B cell (primary cell): ENCODE measurements at regions of chr6 and their contacts with region 1.

Region 1: GRCh38 chr6:107657755-107658461 is 166.2 kb downstream of the SCML4 start:
- DNase-seq: peak; percentile 94
- ATAC-seq: peak; percentile 93
- H3K4me3 ChIP-seq: peak overlapping the region; percentile 34 to 68 (median 53)
- H3K4me3 Mint-ChIP-seq: peak overlapping the region; percentile 84
- H3K27ac ChIP-seq: peak overlapping the region; percentile 86 to 91
- H3K27ac Mint-ChIP-seq: peak overlapping the region; percentile 93
- H3K4me1 ChIP-seq: peaks cover 57 to 62% of the 10 kb centered on the region in 2 donors
- H3K4me1 Mint-ChIP-seq: peaks cover 64% of the 10 kb centered on the region
- H3K27me3 ChIP-seq: no peaks in the 10 kb centered on the region
- H3K27me3 Mint-ChIP-seq: no peaks in the 10 kb centered on the region
- CTCF ChIP-seq: peak; percentile 40

Region 2: GRCh38 chr6:106325336-106326178 is 1332.4 kb before region 1 on chr6 and contains the start of gene ATG5:
- CTCF ChIA-PET with region 1: no interaction called
- POLR2A ChIA-PET with region 1: no interaction called
- intact Hi-C with region 1: loop called (anchors 10 kb)
- DNase-seq: peak; percentile 99
- ATAC-seq: peak; percentile 92
- H3K4me3 ChIP-seq: peak within 1 kb of the TSS; percentile 87 to 99 (median 94)
- H3K4me3 Mint-ChIP-seq: peak within 1 kb of the TSS; percentile 100
- H3K27ac ChIP-seq: peak within 1 kb of the TSS; percentile 89 to 91
- H3K27ac Mint-ChIP-seq: peak within 1 kb of the TSS; percentile 98
- H3K4me1 ChIP-seq: peaks cover 16 to 20% of the 10 kb centered on the region in 2 donors
- H3K4me1 Mint-ChIP-seq: peaks cover 44% of the 10 kb centered on the region
- H3K27me3 ChIP-seq: peaks cover 0 to 6% (median 4%) of the 10 kb centered on the region in 4 experiments
- H3K27me3 Mint-ChIP-seq: peaks cover 27% of the 10 kb centered on the region
- CTCF ChIP-seq: no peak
- total RNA-seq, gene ATG5: 26.3 and 34.0 TPM in 2 replicates

Region 3: DNA sequence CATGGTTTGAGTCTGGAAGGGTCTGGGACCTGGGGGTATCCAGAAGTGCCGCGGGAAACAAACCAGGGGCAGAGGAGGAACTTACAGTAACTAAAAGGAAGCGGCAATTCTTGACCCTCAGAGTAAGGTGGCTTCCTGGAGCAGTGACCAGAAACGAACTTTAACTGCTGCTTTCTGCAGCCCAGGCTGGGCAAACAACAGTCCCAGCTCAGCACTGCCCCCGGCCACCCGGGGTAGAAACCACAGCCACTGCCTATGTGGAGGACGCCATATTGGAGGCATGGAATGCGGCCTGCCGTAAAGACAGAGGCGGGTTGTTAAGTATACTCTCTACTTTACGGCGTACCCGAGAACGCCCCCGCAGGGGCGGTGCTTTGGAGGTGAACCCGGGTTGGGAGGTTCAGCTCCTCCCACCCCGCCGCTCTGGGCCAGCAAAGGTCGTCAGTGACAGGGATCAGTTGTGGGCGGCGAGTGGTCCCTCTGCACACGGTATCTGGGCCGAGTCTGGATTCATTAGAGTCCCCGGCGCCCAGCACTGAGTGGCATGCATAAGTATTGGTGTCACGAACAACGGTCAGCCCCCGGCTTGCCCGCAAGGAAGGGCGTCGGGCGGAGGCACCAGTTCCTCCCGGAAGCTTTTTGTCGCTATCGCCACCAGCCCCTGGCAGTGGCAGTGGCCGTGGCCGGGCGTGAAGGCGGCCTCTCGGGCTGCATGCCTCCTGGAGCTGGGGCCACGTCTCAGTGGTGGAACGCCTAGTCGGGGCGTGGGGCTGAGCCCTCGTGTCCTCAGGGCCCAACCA is 198.4 kb before region 1 on chr6 and contains the start of gene PDSS2:
- CTCF ChIA-PET with region 1: interaction called, 7 read pairs
- POLR2A ChIA-PET with region 1: interaction called, 4 read pairs
- intact Hi-C with region 1: loop called (anchors 1 kb)
- DNase-seq: peak; percentile 96
- ATAC-seq: peak; percentile 96
- H3K4me3 ChIP-seq: peak within 1 kb of the TSS; percentile 70 to 96 (median 93)
- H3K4me3 Mint-ChIP-seq: peak within 1 kb of the TSS; percentile 88
- H3K27ac ChIP-seq: peak within 1 kb of the TSS; percentile 88 to 91
- H3K27ac Mint-ChIP-seq: peak within 1 kb of the TSS; percentile 99
- H3K4me1 ChIP-seq: peaks cover 10 to 13% of the 10 kb centered on the region in 2 donors
- H3K4me1 Mint-ChIP-seq: peaks cover 25% of the 10 kb centered on the region
- H3K27me3 ChIP-seq: no peaks in the 10 kb centered on the region
- H3K27me3 Mint-ChIP-seq: no peaks in the 10 kb centered on the region
- CTCF ChIP-seq: peak; percentile 52
- total RNA-seq, gene PDSS2: 16.9 and 18.3 TPM in 2 replicates

Region 4: DNA sequence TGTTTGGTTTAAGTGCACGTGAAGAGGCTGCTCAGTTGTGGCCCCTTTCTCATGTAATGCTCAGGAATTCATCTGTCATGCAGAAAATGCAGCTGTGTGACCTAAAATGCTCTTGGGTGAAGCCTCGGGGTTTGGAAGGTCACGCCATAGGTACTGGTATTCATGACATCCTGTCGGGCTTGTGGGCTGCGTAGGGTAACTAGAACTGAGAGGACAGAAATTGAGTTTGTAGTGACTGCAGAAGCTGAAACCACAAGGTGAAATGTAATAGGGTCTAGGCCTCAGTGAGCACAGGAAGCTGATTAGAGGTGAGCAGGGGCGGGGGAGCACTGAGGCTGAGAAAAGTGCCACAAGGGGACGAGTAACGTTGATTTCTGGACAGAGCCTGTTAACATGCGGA is 39.2 kb before region 1 on chr6:
- CTCF ChIA-PET with region 1: no interaction called
- POLR2A ChIA-PET with region 1: interaction called, 11 read pairs
- intact Hi-C with region 1: loop called (anchors 5 kb)
- DNase-seq: peak; percentile 64
- ATAC-seq: peak; percentile 92
- H3K4me3 ChIP-seq: no peak overlapping the region
- H3K4me3 Mint-ChIP-seq: peak overlapping the region; percentile 24
- H3K27ac ChIP-seq: peak overlapping the region; percentile 13 to 32
- H3K27ac Mint-ChIP-seq: peak overlapping the region; percentile 11
- H3K4me1 ChIP-seq: peaks cover 34 to 45% of the 10 kb centered on the region in 2 donors
- H3K4me1 Mint-ChIP-seq: peaks cover 34% of the 10 kb centered on the region
- H3K27me3 ChIP-seq: no peaks in the 10 kb centered on the region
- H3K27me3 Mint-ChIP-seq: no peaks in the 10 kb centered on the region
- CTCF ChIP-seq: no peak

Region 5: DNA sequence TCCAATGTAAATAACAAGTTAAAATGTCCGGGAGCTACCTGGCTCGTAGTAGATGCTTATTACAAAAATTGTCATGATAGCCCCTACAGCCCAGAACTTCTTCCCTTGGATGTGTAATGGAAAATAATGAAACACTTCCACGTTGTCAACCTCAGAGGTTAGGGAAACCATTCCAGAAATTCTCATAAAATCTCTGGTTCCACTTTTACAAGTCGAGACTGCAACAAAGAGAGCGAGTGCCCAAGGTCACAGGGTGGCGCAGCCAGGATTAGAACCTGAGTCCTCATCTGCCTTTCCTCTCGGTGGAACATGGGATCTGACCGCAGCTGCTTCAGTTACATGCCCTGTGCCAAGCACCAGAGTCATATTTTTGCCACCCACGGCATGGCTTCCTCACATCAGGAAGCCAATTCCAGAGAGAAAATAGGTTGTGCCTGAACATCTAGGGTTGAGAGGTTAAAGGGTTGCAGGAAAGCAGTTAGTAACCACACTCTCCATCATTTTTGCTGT is 10.4 kb before region 1 on chr6:
- CTCF ChIA-PET with region 1: interaction called, 25 read pairs
- POLR2A ChIA-PET with region 1: interaction called, 4 read pairs
- intact Hi-C with region 1: loop called (anchors 1 kb)
- DNase-seq: no peak
- ATAC-seq: no peak
- H3K4me3 ChIP-seq: no peak overlapping the region
- H3K4me3 Mint-ChIP-seq: no peak overlapping the region
- H3K27ac ChIP-seq: no peak overlapping the region
- H3K27ac Mint-ChIP-seq: no peak overlapping the region
- H3K4me1 ChIP-seq: peaks cover 29 to 36% of the 10 kb centered on the region in 2 donors
- H3K4me1 Mint-ChIP-seq: peaks cover 38% of the 10 kb centered on the region
- H3K27me3 ChIP-seq: no peaks in the 10 kb centered on the region
- H3K27me3 Mint-ChIP-seq: no peaks in the 10 kb centered on the region
- CTCF ChIP-seq: no peak

Region 6: GRCh38 chr6:107704347-107705013 is 46.6 kb after region 1 on chr6:
- CTCF ChIA-PET with region 1: no interaction called
- POLR2A ChIA-PET with region 1: no interaction called
- intact Hi-C with region 1: loop called (anchors 1 kb)
- DNase-seq: peak; percentile 67
- ATAC-seq: peak; percentile 53
- H3K4me3 ChIP-seq: no peak overlapping the region
- H3K4me3 Mint-ChIP-seq: no peak overlapping the region
- H3K27ac ChIP-seq: no peak overlapping the region
- H3K27ac Mint-ChIP-seq: no peak overlapping the region
- H3K4me1 ChIP-seq: peaks cover 0 to 5% of the 10 kb centered on the region in 2 donors
- H3K4me1 Mint-ChIP-seq: peaks cover 2% of the 10 kb centered on the region
- H3K27me3 ChIP-seq: no peaks in the 10 kb centered on the region
- H3K27me3 Mint-ChIP-seq: no peaks in the 10 kb centered on the region
- CTCF ChIP-seq: peak; percentile 85